HepG2 (cell line): ENCODE measurements at regions of chr2 and their contacts with region 1.

Region 1: DNA sequence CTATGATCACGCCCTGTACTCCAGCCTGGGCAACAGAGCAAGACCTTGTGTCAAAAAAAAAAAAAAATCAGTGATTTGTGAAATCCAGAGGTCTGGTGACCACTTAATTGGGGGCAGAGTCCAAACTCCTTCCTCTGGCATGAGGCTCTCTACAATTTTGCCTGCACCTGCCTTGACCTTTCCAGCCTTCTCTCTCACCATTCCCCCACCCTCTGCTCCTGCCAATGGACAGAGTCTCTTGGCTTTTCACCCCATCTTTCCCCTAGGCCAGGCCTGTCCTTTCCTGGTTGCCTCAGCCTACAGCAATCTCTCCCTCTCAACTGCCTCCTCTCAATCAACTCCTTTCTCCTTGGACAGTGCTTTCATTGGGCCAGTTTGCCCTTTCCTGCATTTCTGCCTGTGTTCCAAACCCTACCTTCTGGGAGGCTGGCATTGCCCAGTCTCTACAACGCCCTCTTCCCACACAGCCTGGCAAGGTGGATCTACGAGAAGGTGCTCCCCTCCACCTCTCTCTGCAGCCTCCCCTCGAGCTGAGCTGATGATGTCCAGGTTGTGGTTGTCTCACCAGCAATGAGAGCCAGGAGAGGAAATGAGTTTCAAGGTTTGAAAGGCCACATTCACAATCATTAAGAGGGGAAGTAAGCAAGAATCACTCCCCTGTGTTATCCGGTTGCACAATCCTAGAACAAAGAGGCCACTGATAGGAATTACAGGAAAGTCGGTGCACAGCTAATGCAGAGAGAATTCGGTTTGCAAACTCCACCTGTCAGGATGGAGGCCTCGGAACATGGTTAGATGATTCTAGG is 39.5 kb upstream of the NPAS2 start:
- DNase-seq: peak; percentile 100
- ATAC-seq: peak; percentile 90
- H3K4me3 ChIP-seq: peak overlapping the region in 2 of 3 experiments; percentile 36 to 68; a peak in 4 of 6 replicates
- H3K27ac ChIP-seq: peak overlapping the region; percentile 100
- H3K4me1 ChIP-seq: peaks cover 84% of the 10 kb centered on the region
- H3K27me3 ChIP-seq: no peaks in the 10 kb centered on the region
- CTCF ChIP-seq: peak; percentile 37
- EP300 ChIP-seq: peak; percentile 87 to 99
- POLR2A ChIP-seq: peak; percentile 64 to 85
- RAD21 ChIP-seq: peak; percentile 40; the same call in 1 of the 2 replicates

Region 2: GRCh38 chr2:100653449-100654035 is 126.9 kb before region 1 on chr2:
- CTCF ChIA-PET with region 1: no interaction called
- POLR2A ChIA-PET with region 1: no interaction called
- in situ Hi-C with region 1: no loop called
- intact Hi-C with region 1: no loop called
- DNase-seq: no peak
- ATAC-seq: no peak; the same call in 2 of the 3 replicates
- H3K4me3 ChIP-seq: no peak overlapping the region
- H3K27ac ChIP-seq: no peak overlapping the region
- H3K4me1 ChIP-seq: no peaks in the 10 kb centered on the region
- H3K27me3 ChIP-seq: peaks cover 3 to 44% of the 10 kb centered on the region in 2 experiments; a peak in 3 of 5 replicates
- CTCF ChIP-seq: no peak
- EP300 ChIP-seq: no peak
- POLR2A ChIP-seq: no peak
- RAD21 ChIP-seq: no peak

Region 3: DNA sequence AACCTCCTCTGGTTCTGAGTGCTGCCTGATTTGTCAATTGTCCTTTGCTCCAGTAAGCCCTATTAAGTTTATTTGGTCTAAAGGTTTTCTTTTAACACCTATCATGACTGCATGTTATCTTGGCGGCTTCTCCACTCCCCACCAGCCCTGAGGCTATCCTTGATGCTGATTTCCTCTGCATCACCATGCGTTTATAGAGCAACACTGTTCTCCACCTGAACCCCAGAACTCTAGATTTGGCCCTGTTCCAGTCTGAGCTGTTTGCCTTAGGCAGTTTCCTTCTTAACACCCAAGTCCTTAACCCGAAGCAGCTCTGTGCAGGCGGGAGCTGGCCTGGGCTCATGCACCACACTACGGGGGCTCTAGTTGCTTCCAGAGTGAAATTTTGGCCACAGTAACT is 58.7 kb before region 1 on chr2:
- CTCF ChIA-PET with region 1: no interaction called
- POLR2A ChIA-PET with region 1: no interaction called
- in situ Hi-C with region 1: no loop called
- intact Hi-C with region 1: no loop called
- DNase-seq: no peak
- ATAC-seq: no peak
- H3K4me3 ChIP-seq: no peak overlapping the region
- H3K27ac ChIP-seq: no peak overlapping the region
- H3K4me1 ChIP-seq: 0 out of 2 replicates have a peak, but pooled peaks cover 7% of the 10 kb centered on the region
- H3K27me3 ChIP-seq: peaks cover 3 to 59% of the 10 kb centered on the region in 2 experiments
- CTCF ChIP-seq: no peak
- EP300 ChIP-seq: no peak
- POLR2A ChIP-seq: no peak
- RAD21 ChIP-seq: no peak

Region 4: GRCh38 chr2:100742277-100743254 is 37.8 kb before region 1 on chr2:
- CTCF ChIA-PET with region 1: no interaction called
- POLR2A ChIA-PET with region 1: interaction called, 9 read pairs
- in situ Hi-C with region 1: no loop called
- intact Hi-C with region 1: loop called (anchors 2 kb)
- DNase-seq: peak; percentile 82
- ATAC-seq: peak; percentile 84
- H3K4me3 ChIP-seq: peak overlapping the region in 2 of 3 experiments; percentile 0 to 6; a peak in 1 of 6 replicates
- H3K27ac ChIP-seq: no peak overlapping the region
- H3K4me1 ChIP-seq: peaks cover 48% of the 10 kb centered on the region
- H3K27me3 ChIP-seq: no peaks in the 10 kb centered on the region; a peak in 1 of 5 replicates
- CTCF ChIP-seq: 0 out of 2 replicates have a peak, but pooled peaks have one; percentile 5
- EP300 ChIP-seq: peak in 1 of 2 experiments; percentile 38; a peak in 1 of 4 replicates
- POLR2A ChIP-seq: no peak
- RAD21 ChIP-seq: no peak

Region 5: DNA sequence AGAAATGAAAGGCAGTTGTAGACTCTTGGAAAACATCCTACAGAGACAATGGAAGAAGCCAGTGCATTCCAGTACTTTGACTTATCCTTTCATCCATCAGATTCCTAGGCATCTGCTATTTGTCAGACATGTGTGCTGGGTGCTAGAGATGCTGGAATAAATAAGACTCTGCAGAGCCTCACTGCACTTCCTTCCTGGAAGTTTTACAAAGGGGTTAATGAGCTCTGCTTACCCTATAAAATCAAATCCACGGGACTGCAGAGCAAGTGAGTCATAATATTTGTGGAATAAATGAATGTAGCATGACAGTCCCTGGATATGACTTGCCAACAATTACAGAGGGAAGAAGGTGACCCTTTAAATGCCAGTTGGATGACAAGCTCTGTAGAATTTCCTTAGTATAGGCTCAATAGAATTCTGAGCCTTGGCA is 13.2 kb before region 1 on chr2:
- CTCF ChIA-PET with region 1: no interaction called
- POLR2A ChIA-PET with region 1: interaction called, 39 read pairs
- in situ Hi-C with region 1: no loop called
- intact Hi-C with region 1: no loop called
- DNase-seq: no peak
- ATAC-seq: no peak
- H3K4me3 ChIP-seq: no peak overlapping the region
- H3K27ac ChIP-seq: no peak overlapping the region
- H3K4me1 ChIP-seq: peaks cover 53% of the 10 kb centered on the region
- H3K27me3 ChIP-seq: no peaks in the 10 kb centered on the region
- CTCF ChIP-seq: no peak
- EP300 ChIP-seq: no peak
- POLR2A ChIP-seq: no peak
- RAD21 ChIP-seq: no peak

Region 6: GRCh38 chr2:100818606-100819369 is 38.4 kb after region 1 on chr2:
- CTCF ChIA-PET with region 1: no interaction called
- POLR2A ChIA-PET with region 1: interaction called, 28 read pairs
- in situ Hi-C with region 1: loop called (anchors 5 kb)
- intact Hi-C with region 1: loop called (anchors 1 kb)
- DNase-seq: peak; percentile 78
- ATAC-seq: peak; percentile 71
- H3K4me3 ChIP-seq: peak overlapping the region; percentile 76 to 96 (median 87)
- H3K27ac ChIP-seq: peak overlapping the region; percentile 65
- H3K4me1 ChIP-seq: peaks cover 71% of the 10 kb centered on the region
- H3K27me3 ChIP-seq: no peaks in the 10 kb centered on the region; a peak in 1 of 5 replicates
- CTCF ChIP-seq: peak; percentile 81
- EP300 ChIP-seq: no peak; a peak in 1 of 4 replicates
- POLR2A ChIP-seq: peak; percentile 69 to 70
- RAD21 ChIP-seq: peak; percentile 85

Region 7: DNA sequence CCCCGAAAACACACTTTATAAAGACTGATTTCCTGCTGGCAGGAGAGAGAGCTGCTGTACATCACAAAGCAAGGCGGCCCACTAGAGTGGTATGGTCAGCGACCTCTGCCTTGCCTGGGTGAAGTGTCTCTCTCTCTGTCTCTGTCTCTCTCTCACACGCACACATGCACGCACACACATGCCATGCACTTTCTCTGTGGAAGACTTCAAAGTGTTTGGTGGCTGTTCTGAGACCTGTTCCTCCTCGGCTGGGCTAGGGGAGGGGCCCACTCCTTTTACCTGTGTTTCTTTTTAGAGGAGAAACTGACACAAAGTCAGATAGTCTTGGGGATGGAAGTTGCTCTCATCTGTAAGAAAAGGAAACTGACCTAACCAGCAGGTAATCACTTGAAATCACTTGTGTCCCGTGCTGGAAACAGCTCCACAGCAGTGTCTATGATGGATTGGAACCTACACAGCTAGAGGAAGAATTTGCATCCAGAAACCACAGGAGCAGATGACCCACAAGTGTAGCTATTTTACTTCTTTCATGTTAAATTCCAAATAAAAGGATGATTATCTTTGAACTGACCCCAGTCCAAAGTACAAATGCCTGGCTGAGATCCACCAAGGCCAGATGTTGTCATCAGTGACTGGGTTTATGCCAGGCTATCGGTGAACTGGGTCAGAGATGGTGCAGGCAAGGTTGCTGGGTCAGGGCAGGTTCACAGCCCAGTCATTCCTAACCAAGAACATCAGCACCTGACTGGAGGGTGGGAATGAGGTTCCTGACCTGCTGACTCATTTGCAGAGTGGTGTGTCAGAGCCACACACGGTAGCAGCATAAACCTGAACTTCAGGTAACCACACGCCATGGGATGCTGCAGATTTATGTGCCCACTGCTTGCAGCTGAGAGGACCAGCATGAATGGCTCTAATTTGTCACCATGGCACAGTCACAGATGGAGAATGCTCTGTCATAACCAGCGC is 102.5 kb after region 1 on chr2:
- CTCF ChIA-PET with region 1: no interaction called
- POLR2A ChIA-PET with region 1: interaction called, 3 read pairs
- in situ Hi-C with region 1: no loop called
- intact Hi-C with region 1: loop called (anchors 2 kb)
- DNase-seq: peak; percentile 96
- ATAC-seq: peak; percentile 89
- H3K4me3 ChIP-seq: no peak overlapping the region
- H3K27ac ChIP-seq: peak overlapping the region; percentile 83
- H3K4me1 ChIP-seq: peaks cover 73% of the 10 kb centered on the region
- H3K27me3 ChIP-seq: no peaks in the 10 kb centered on the region
- CTCF ChIP-seq: no peak
- EP300 ChIP-seq: peak; percentile 82 to 90
- POLR2A ChIP-seq: peak in 1 of 2 experiments; percentile 33; a peak in 1 of 4 replicates
- RAD21 ChIP-seq: no peak

Region 8: DNA sequence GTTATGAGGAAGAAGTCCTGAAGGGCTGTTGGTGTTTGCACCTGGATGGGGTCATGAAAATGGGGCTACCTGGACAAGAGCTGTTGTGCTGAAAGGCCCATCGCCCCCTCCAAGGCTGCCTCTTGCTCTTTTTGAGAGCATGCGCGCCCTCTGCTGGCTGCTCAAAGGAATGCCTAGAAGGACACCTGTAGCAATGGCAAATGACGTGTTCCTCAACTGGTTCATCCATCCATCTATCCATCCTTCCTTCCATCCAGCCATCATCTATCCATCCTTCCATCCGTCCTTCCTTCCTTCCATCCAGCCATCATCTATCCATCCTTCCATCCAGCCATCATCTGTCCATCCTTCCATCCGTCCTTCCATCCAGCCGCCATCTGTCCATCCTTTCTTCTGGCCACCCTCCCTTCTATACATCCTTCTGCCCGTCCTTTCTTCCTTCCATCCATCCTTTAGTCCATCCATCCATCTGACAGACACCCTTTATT is 204.5 kb after region 1 on chr2:
- CTCF ChIA-PET with region 1: no interaction called
- POLR2A ChIA-PET with region 1: no interaction called
- in situ Hi-C with region 1: no loop called
- intact Hi-C with region 1: no loop called
- DNase-seq: peak; percentile 81
- ATAC-seq: peak; percentile 80
- H3K4me3 ChIP-seq: no peak overlapping the region
- H3K27ac ChIP-seq: no peak overlapping the region
- H3K4me1 ChIP-seq: peaks cover 10% of the 10 kb centered on the region
- H3K27me3 ChIP-seq: no peaks in the 10 kb centered on the region
- CTCF ChIP-seq: peak; percentile 98
- EP300 ChIP-seq: no peak
- POLR2A ChIP-seq: no peak
- RAD21 ChIP-seq: peak; percentile 93